ENCODE measurements at regions of chr3 and their contacts with region 1.

Region 1: DNA sequence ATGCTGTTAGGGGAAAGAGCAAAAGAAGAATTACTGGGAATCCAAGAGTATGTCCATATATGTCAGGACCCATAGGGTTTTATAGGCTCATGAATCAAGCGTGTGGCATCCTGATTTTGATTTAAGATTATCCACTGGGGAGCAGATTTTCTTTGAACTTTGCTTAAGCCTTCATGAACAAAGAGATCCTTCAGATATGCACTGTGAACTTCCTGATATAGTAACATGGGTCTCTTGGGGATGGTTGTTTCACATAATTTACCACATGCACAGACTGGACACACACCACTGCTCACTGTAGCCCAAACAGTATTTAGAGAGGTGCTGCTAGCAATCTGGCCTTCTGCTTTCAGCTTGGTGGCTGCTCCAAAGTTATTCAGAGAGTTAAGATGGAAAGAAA is 200.9 kb upstream of the ZPLD1 start:
- DNase-seq: no peak
- H3K4me3 ChIP-seq: no peak overlapping the region
- CTCF ChIP-seq: no peak
- POLR2A ChIP-seq: no peak

Region 2: DNA sequence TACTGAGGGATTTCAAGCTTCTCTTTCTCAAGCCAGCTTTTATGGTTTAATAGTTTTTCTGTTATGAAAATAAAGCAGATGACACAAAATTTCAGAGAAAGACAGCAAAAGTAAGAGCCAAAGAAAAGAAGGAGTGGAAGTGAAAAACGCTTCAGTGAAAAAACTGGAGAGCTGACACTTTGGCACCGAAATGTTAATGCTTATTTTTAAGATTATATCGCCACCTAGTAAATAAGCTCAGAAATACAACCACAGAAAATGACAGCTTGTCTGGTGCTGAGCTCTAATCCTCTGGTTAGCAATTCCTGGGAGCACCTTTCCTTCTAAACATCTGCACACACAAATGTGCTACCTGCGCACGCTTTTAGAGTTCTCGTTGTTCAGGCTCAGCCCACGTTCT is 302.6 kb after region 1 on chr3:
- intact Hi-C with region 1: loop called (anchors 5 kb)
- DNase-seq: no peak
- H3K4me3 ChIP-seq: no peak overlapping the region
- CTCF ChIP-seq: no peak
- POLR2A ChIP-seq: no peak

Measured in lower leg skin (tissue), 4 donors.